ENCODE measurements at regions of chr7 and their contacts with region 1.

Region 1: DNA sequence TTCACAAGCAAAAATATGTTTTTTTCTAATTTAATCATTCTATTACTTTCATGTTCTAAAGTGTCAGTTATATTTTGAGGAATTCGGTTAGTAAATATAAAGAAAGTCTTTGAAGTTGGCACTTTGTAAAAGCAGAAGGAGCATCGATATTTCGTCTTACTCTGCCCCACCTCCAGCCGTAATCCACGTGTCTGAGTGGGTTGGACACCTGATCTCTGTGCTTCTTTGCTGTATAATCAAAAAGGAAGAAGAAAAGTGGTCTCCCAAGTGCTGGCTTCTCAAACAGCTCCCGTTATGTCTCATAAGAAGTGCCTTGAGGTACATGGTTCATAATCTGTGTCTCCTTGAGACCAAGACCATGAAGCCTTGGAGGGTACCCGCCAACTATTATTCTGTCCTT is 19.8 kb downstream of the PRKAR2B start:
- DNase-seq: no peak
- ATAC-seq: no peak
- H3K4me3 ChIP-seq: no peak overlapping the region
- H3K27ac ChIP-seq: no peak overlapping the region
- H3K4me1 ChIP-seq: no peaks in the 10 kb centered on the region
- H3K27me3 ChIP-seq: peaks cover 0 to 18% of the 10 kb centered on the region in 2 experiments; a peak in 2 of 5 replicates
- CTCF ChIP-seq: no peak
- EP300 ChIP-seq: no peak
- POLR2A ChIP-seq: no peak
- RAD21 ChIP-seq: no peak

Region 2: DNA sequence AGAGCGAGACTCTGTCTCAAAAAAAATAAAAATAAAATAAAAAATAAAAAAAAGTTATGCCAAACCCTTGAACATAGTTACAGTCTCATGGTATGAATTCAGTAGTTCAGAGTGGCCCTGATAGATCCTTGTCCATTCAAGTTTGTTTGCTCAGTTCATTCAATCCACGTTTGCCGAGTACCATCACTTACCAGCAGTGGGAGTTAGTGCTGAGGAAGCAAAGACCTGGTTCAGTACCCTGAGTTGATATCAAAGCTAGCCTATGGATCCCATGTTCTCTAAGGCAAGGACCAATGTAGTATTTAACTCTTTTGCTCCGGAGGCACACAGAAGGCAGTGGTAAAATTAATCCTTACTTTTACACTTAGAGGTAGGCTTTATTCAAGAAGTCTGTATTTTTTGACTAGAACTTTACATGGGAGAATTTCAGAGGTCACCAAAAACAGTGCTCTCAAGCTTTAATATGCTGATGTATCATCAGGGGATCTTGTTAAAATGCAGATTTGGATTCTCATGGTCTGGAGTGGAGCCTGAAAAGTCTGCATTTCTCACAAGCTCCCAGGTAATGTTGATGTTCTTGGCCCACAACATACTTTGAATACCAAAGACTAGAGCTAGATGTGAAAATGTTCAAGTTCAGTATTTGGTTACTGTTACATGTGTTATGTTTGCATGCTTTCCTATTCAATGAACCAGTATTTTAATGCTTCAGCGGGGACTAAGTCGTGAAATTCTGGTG is 66.4 kb after region 1 on chr7:
- CTCF ChIA-PET with region 1: no interaction called
- POLR2A ChIA-PET with region 1: no interaction called
- in situ Hi-C with region 1: no loop called
- intact Hi-C with region 1: loop called (anchors 5 kb)
- DNase-seq: peak; percentile 11
- ATAC-seq: peak; percentile 85
- H3K4me3 ChIP-seq: no peak overlapping the region
- H3K27ac ChIP-seq: no peak overlapping the region
- H3K4me1 ChIP-seq: no peaks in the 10 kb centered on the region
- H3K27me3 ChIP-seq: no peaks in the 10 kb centered on the region; a peak in 1 of 5 replicates
- CTCF ChIP-seq: no peak
- EP300 ChIP-seq: no peak
- POLR2A ChIP-seq: no peak
- RAD21 ChIP-seq: no peak

Region 3: GRCh38 chr7:107180378-107180777 is 116.1 kb after region 1 on chr7:
- CTCF ChIA-PET with region 1: no interaction called
- POLR2A ChIA-PET with region 1: no interaction called
- in situ Hi-C with region 1: no loop called
- intact Hi-C with region 1: no loop called
- DNase-seq: peak; percentile 22
- ATAC-seq: no peak
- H3K4me3 ChIP-seq: no peak overlapping the region
- H3K27ac ChIP-seq: no peak overlapping the region
- H3K4me1 ChIP-seq: peaks cover 14% of the 10 kb centered on the region
- H3K27me3 ChIP-seq: no peaks in the 10 kb centered on the region
- CTCF ChIP-seq: no peak
- EP300 ChIP-seq: no peak
- POLR2A ChIP-seq: no peak
- RAD21 ChIP-seq: no peak

Measured in HepG2 (cell line).